ENCODE measurements at regions of chr7 and their contacts with region 1.

Region 1: GRCh38 chr7:121547544-121548092 is 151.5 kb upstream of the FAM3C start:
- DNase-seq: peak; percentile 74
- ATAC-seq: peak; percentile 86
- H3K4me3 ChIP-seq: no peak overlapping the region
- H3K4me3 Mint-ChIP-seq: no peak overlapping the region
- H3K27ac ChIP-seq: no peak overlapping the region
- H3K27ac Mint-ChIP-seq: no peak overlapping the region
- H3K4me1 ChIP-seq: no peaks in the 10 kb centered on the region
- H3K4me1 Mint-ChIP-seq: peaks cover 9% of the 10 kb centered on the region
- H3K27me3 ChIP-seq: no peaks in the 10 kb centered on the region
- H3K27me3 Mint-ChIP-seq: peaks cover 3% of the 10 kb centered on the region
- CTCF ChIP-seq: peak; percentile 96

Region 2: DNA sequence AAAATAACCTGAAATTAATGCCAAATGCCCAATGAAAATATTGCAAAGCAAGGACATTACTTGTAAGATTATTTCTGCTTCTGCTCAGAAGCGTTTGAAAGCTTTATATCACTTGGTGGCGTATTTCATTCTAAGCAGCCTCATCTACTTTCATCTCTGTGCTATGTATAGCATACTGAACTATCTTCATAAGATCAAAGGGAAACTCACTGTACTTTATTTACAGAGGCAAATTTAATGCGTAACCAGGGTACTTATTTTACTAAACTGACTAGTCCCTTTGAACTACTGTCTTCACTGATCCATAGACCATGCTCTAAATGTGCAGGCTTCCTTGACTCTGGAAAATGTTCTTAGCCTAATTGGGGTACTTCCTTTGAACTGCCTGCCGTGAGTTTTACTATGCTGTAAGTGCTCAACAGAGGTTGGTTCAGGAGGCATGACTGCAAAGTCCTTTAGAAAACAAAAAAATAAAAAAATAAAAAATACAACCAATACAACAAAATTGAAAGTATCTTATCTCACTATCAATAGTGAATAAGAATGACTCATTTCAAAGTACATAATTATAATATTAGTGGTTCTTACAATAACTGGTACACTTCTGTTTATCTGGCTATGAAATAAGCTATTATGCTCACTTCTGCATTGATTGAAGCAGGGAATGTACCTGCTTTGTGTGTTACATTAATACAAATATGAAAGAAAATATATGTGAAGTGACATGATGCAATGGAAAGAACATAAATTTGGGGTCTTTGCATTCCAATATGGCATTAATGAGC is 648.7 kb before region 1 on chr7:
- CTCF ChIA-PET with region 1: no interaction called
- POLR2A ChIA-PET with region 1: no interaction called
- intact Hi-C with region 1: no loop called
- DNase-seq: no peak
- ATAC-seq: no peak
- H3K4me3 ChIP-seq: no peak overlapping the region
- H3K4me3 Mint-ChIP-seq: no peak overlapping the region
- H3K27ac ChIP-seq: no peak overlapping the region
- H3K27ac Mint-ChIP-seq: no peak overlapping the region
- H3K4me1 ChIP-seq: no peaks in the 10 kb centered on the region
- H3K4me1 Mint-ChIP-seq: no peaks in the 10 kb centered on the region
- H3K27me3 ChIP-seq: no peaks in the 10 kb centered on the region
- H3K27me3 Mint-ChIP-seq: peaks cover 34% of the 10 kb centered on the region
- CTCF ChIP-seq: no peak

Region 3: GRCh38 chr7:120987683-120988590 is 559.7 kb before region 1 on chr7:
- CTCF ChIA-PET with region 1: interaction called, 7 read pairs
- POLR2A ChIA-PET with region 1: no interaction called
- intact Hi-C with region 1: loop called (anchors 5 kb)
- DNase-seq: peak; percentile 89
- ATAC-seq: peak; percentile 95
- H3K4me3 ChIP-seq: peak overlapping the region; percentile 29 to 77 (median 49)
- H3K4me3 Mint-ChIP-seq: peak overlapping the region; percentile 95
- H3K27ac ChIP-seq: no peak overlapping the region
- H3K27ac Mint-ChIP-seq: no peak overlapping the region
- H3K4me1 ChIP-seq: peaks cover 24% of the 10 kb centered on the region in 2 donors
- H3K4me1 Mint-ChIP-seq: peaks cover 23% of the 10 kb centered on the region
- H3K27me3 ChIP-seq: peaks cover 0 to 20% (median 18%) of the 10 kb centered on the region in 4 experiments
- H3K27me3 Mint-ChIP-seq: peaks cover 44% of the 10 kb centered on the region
- CTCF ChIP-seq: peak; percentile 98

Region 4: DNA sequence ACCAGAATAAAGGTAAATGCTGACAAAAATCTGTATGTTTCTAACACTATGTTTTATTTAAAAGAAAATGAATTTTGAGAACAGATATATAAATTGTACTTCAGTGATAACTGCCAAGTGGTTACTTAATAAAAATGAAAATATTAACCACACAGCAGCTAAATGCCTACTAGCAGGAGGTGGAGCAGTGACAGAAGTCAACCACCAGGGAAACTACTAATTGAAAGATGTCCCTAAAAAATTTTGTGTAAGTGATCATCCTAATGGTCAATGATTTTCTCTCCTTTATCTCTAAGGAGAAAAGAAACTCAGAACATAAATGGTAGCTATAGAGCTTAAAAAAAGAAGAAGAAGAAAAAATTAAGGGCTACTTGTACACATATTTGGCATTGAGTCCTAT is 195.9 kb before region 1 on chr7:
- CTCF ChIA-PET with region 1: interaction called, 15 read pairs
- POLR2A ChIA-PET with region 1: no interaction called
- intact Hi-C with region 1: no loop called
- DNase-seq: no peak
- ATAC-seq: peak; percentile 28
- H3K4me3 ChIP-seq: no peak overlapping the region
- H3K4me3 Mint-ChIP-seq: no peak overlapping the region
- H3K27ac ChIP-seq: peak overlapping the region in 1 of 2 donors; percentile 29
- H3K27ac Mint-ChIP-seq: peak overlapping the region; percentile 80
- H3K4me1 ChIP-seq: no peaks in the 10 kb centered on the region
- H3K4me1 Mint-ChIP-seq: peaks cover 8% of the 10 kb centered on the region
- H3K27me3 ChIP-seq: no peaks in the 10 kb centered on the region
- H3K27me3 Mint-ChIP-seq: no peaks in the 10 kb centered on the region
- CTCF ChIP-seq: peak; percentile 35

Region 5: GRCh38 chr7:121366852-121367431 is 180.7 kb before region 1 on chr7:
- CTCF ChIA-PET with region 1: interaction called, 169 read pairs
- POLR2A ChIA-PET with region 1: no interaction called
- intact Hi-C with region 1: loop called (anchors 1 kb)
- DNase-seq: peak; percentile 74
- ATAC-seq: no peak
- H3K4me3 ChIP-seq: no peak overlapping the region
- H3K4me3 Mint-ChIP-seq: peak overlapping the region; percentile 6
- H3K27ac ChIP-seq: peak overlapping the region in 1 of 2 donors; percentile 76
- H3K27ac Mint-ChIP-seq: peak overlapping the region; percentile 44
- H3K4me1 ChIP-seq: peaks cover 42 to 46% of the 10 kb centered on the region in 2 donors
- H3K4me1 Mint-ChIP-seq: peaks cover 55% of the 10 kb centered on the region
- H3K27me3 ChIP-seq: no peaks in the 10 kb centered on the region
- H3K27me3 Mint-ChIP-seq: no peaks in the 10 kb centered on the region
- CTCF ChIP-seq: peak; percentile 92

Region 6: GRCh38 chr7:121433780-121434179 is 113.8 kb before region 1 on chr7:
- CTCF ChIA-PET with region 1: interaction called, 9 read pairs
- POLR2A ChIA-PET with region 1: interaction called, 6 read pairs
- intact Hi-C with region 1: loop called (anchors 10 kb)
- DNase-seq: no peak
- ATAC-seq: no peak
- H3K4me3 ChIP-seq: no peak overlapping the region
- H3K4me3 Mint-ChIP-seq: no peak overlapping the region
- H3K27ac ChIP-seq: no peak overlapping the region
- H3K27ac Mint-ChIP-seq: no peak overlapping the region
- H3K4me1 ChIP-seq: peaks cover 17 to 25% of the 10 kb centered on the region in 2 donors
- H3K4me1 Mint-ChIP-seq: peaks cover 25% of the 10 kb centered on the region
- H3K27me3 ChIP-seq: no peaks in the 10 kb centered on the region
- H3K27me3 Mint-ChIP-seq: no peaks in the 10 kb centered on the region
- CTCF ChIP-seq: no peak